ENCODE measurements at regions of chrX and their contacts with region 1.

Region 1: DNA sequence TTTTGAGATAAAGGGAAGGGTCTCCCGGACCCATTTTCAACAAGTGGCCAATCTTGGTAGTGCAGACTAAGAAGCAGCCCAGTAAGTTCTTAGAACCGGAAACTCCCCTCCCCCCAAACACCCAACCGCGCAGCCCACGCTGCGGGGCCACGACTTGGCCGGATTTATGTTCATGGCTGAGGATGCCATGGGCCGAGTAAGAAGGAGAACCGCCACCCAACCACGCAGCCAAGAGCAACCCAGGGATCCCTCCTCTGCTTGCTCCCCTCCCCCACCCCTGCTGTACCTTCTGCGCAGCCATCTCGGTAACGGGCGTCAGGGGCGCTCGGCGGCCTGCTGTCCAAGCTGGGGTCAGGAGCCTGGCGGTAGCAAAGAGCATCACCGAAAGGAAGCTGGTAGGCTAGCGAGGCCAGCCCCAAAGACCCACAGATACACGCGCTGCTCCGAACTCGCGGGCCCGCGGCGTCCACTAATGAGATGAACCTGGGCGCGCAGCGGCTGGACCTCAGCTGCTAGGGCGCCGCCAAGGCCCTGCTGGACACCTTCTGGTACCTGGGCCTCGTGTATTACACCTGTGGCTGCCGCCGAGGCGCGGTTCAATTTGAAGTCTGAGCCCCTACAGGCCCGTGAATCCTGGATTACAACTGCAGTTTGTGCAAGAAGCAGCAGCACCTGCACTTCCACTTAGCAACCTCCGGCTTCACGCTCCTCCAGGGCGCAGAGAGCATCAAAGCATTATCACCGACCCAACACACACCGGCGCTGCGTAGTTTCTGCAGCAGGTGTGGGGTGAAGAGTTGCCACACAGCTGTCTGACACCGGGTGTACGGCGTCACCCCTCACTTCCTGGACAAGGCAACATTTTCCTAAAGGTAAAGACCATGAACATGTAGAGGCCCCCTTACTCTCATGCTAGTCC is 63.4 kb downstream of the NUDT10 start:
- DNase-seq: peak; percentile 77
- ATAC-seq: peak; percentile 77
- H3K4me3 Mint-ChIP-seq: peak overlapping the region; percentile 81
- H3K27ac Mint-ChIP-seq: peak overlapping the region; percentile 84
- H3K4me1 Mint-ChIP-seq: peaks cover 44% of the 10 kb centered on the region
- H3K27me3 Mint-ChIP-seq: no peaks in the 10 kb centered on the region

Region 2: DNA sequence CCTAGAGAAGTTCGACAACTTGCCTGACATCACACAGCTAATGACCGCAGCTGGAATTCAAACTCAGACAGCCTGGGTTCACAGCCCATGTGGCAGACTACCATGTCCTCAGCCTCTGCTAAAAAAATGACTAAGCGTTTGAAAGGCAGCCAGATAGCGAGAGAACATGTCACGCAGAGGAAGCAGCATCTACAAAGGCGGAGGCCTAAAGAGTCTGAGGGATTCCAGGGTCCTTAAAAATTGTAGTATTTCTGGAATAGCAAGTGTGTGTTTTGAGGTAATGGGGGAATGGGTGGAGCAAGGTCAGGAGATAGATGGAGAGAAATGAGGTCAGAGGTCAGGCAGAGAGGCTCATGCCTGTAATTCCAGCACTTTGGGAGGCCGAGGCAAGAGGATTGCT is 518.7 kb before region 1 on chrX:
- CTCF ChIA-PET with region 1: no interaction called
- POLR2A ChIA-PET with region 1: no interaction called
- intact Hi-C with region 1: no loop called
- DNase-seq: no peak
- ATAC-seq: no peak
- H3K4me3 Mint-ChIP-seq: no peak overlapping the region
- H3K27ac Mint-ChIP-seq: no peak overlapping the region
- H3K4me1 Mint-ChIP-seq: peaks cover 2% of the 10 kb centered on the region
- H3K27me3 Mint-ChIP-seq: peaks cover 2% of the 10 kb centered on the region

Region 3: GRCh38 chrX:51336584-51336983 is 59.5 kb before region 1 on chrX:
- CTCF ChIA-PET with region 1: interaction called, 3 read pairs
- POLR2A ChIA-PET with region 1: no interaction called
- intact Hi-C with region 1: loop called in 1 of 2 experiments (anchors 2 kb)
- DNase-seq: peak; percentile 39
- ATAC-seq: peak; percentile 58
- H3K4me3 Mint-ChIP-seq: no peak overlapping the region
- H3K27ac Mint-ChIP-seq: no peak overlapping the region
- H3K4me1 Mint-ChIP-seq: peaks cover 1% of the 10 kb centered on the region
- H3K27me3 Mint-ChIP-seq: peaks cover 3% of the 10 kb centered on the region